ENCODE measurements at regions of chr11 and their contacts with region 1.

Region 1: GRCh38 chr11:6489306-6489705 is 7.8 kb upstream of the DNHD1 start:
- DNase-seq: peak; percentile 69
- ATAC-seq: peak; percentile 88
- H3K4me3 ChIP-seq: no peak overlapping the region
- H3K27ac ChIP-seq: no peak overlapping the region
- H3K4me1 ChIP-seq: peaks cover 57% of the 10 kb centered on the region
- H3K27me3 ChIP-seq: no peaks in the 10 kb centered on the region
- CTCF ChIP-seq: no peak
- EP300 ChIP-seq: no peak
- POLR2A ChIP-seq: no peak
- RAD21 ChIP-seq: no peak

Region 2: DNA sequence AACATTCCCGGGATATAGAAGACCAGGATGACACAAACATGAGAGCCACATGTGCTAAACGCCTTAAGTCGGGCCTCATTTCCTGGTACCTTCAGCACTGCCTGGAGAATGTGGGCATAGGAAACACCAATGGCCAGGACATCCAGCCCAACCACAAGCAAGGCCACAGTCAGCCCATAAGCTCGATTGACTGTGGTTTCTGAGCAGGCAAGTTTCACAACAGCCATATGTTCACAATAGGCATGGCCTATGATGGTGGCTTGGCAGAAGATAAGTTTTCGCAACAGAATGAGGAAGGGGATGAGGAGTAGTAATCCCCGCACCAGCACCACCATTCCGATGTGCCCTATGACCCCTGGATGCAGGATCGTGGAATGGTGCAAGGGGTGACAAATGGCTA is 431.9 kb before region 1 on chr11:
- CTCF ChIA-PET with region 1: no interaction called
- POLR2A ChIA-PET with region 1: no interaction called
- in situ Hi-C with region 1: no loop called
- intact Hi-C with region 1: no loop called
- DNase-seq: no peak
- ATAC-seq: no peak
- H3K4me3 ChIP-seq: no peak overlapping the region
- H3K27ac ChIP-seq: no peak overlapping the region
- H3K4me1 ChIP-seq: no peaks in the 10 kb centered on the region
- H3K27me3 ChIP-seq: no peaks in the 10 kb centered on the region; a peak in 2 of 5 replicates
- CTCF ChIP-seq: no peak
- EP300 ChIP-seq: no peak
- POLR2A ChIP-seq: no peak
- RAD21 ChIP-seq: no peak

Region 3: GRCh38 chr11:6219359-6219758 is 269.9 kb before region 1 on chr11:
- CTCF ChIA-PET with region 1: no interaction called
- POLR2A ChIA-PET with region 1: no interaction called
- in situ Hi-C with region 1: no loop called
- intact Hi-C with region 1: no loop called
- DNase-seq: no peak
- ATAC-seq: no peak
- H3K4me3 ChIP-seq: no peak overlapping the region
- H3K27ac ChIP-seq: no peak overlapping the region
- H3K4me1 ChIP-seq: no peaks in the 10 kb centered on the region
- H3K27me3 ChIP-seq: no peaks in the 10 kb centered on the region
- CTCF ChIP-seq: no peak
- EP300 ChIP-seq: no peak
- POLR2A ChIP-seq: no peak
- RAD21 ChIP-seq: no peak

Region 4: DNA sequence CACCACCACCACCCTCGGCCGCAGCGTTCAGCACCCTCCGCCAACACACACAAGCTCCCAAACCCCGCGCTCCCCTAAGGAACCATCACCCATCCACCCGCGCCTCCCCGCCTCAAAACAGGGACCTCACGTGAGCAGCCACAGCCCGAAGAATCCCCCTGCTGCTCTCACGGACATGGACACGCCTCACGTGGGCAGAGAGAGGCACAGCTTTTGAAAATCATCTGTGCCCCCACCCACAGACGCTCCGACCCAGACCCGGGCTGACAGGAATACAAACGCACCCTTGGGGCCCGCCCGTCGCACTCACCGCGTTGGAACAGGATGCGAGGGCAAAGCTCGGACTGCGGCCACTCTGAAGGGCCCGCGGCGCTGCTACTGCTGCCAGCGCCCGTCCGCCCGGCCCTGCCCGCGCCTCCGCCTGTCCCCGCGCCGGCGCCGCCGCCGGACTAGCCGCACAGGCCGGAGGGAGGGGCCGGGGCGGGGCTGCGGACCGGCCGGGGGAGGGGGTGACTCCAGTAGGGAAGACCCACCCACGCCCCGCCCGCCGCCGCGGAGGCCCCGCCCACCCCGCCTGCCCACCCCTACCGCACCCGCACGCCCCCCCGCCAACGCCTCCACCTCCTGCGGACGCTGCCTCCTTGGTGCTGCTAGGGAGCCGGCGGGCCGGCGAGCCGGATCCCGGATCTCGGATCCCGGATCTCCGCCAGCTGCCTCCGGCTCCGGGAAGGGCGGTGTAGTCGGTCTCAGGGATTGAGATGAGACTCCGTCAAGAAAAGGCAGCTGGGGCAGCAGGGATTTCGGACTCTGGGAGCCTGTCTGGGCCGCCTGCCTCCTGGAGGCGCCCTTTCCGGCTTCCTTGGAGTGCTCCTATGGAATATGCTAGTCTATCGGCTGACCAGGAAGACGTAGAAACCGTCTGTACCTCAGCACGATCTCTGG is 15.6 kb before region 1 on chr11 and contains the start of gene TRIM3:
- CTCF ChIA-PET with region 1: no interaction called
- POLR2A ChIA-PET with region 1: interaction called, 13 read pairs
- in situ Hi-C with region 1: no loop called
- intact Hi-C with region 1: no loop called
- DNase-seq: peak; percentile 50
- ATAC-seq: peak; percentile 88
- H3K4me3 ChIP-seq: peak within 1 kb of the TSS; percentile 78 to 97 (median 88)
- H3K27ac ChIP-seq: peak within 1 kb of the TSS; percentile 44
- H3K4me1 ChIP-seq: peaks cover 47% of the 10 kb centered on the region
- H3K27me3 ChIP-seq: no peaks in the 10 kb centered on the region; a peak in 1 of 5 replicates
- CTCF ChIP-seq: peak; percentile 34
- EP300 ChIP-seq: no peak
- POLR2A ChIP-seq: peak; percentile 48 to 53; a peak in 3 of 4 replicates
- RAD21 ChIP-seq: 0 out of 2 replicates have a peak, but pooled peaks have one; percentile 18
- total RNA-seq, gene TRIM3: 2.8 and 6.3 TPM in 2 replicates

Measured in HepG2 (cell line).